Posterior vena cava (tissue), 2 donors: ENCODE measurements at regions of chr17 and their contacts with region 1.

Region 1: GRCh38 chr17:5065227-5065744 is 13.0 kb upstream of the ZFP3 start:
- DNase-seq: no peak

Region 2: DNA sequence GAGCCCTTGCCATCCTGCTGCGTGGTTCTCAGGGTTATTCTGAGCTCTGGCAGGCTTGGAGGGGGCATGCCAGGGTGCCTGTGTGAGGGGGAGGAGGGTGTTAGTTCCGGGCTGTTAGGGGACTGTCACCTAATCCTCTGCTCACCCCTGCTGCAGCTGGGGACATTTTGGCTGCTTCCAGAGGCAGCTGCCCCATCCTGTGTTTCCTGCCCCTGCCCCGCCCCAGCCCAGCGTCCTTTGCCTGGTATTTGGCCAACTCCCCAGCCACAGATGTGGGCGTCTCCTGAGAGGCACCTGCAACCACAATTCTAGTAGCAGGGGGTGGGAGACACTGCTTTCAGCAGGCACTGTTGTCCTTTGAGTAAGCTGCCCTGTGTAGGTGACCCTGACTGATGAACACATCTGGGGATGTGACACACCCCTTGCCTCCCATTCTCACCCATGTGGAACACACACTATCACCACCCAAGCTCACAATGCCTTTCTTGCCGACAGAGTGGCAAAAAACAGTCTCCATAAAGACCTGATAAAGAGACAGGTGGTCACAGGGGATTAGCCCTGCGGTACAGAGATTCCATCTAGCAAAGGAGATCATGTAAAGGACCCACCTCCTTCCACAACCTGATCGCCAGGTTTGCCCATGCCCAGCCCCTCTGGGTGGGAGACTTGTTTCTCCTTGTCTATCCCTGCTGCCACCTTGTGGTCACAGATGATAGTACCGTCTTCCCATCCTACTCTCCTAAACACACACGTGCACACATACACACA is 162.1 kb before region 1 on chr17 and contains the start of gene CHRNE:
- intact Hi-C with region 1: loop called (anchors 10 kb)
- DNase-seq: no peak
- total RNA-seq, gene CHRNE: 0.57 to 1.5 TPM

Region 3: DNA sequence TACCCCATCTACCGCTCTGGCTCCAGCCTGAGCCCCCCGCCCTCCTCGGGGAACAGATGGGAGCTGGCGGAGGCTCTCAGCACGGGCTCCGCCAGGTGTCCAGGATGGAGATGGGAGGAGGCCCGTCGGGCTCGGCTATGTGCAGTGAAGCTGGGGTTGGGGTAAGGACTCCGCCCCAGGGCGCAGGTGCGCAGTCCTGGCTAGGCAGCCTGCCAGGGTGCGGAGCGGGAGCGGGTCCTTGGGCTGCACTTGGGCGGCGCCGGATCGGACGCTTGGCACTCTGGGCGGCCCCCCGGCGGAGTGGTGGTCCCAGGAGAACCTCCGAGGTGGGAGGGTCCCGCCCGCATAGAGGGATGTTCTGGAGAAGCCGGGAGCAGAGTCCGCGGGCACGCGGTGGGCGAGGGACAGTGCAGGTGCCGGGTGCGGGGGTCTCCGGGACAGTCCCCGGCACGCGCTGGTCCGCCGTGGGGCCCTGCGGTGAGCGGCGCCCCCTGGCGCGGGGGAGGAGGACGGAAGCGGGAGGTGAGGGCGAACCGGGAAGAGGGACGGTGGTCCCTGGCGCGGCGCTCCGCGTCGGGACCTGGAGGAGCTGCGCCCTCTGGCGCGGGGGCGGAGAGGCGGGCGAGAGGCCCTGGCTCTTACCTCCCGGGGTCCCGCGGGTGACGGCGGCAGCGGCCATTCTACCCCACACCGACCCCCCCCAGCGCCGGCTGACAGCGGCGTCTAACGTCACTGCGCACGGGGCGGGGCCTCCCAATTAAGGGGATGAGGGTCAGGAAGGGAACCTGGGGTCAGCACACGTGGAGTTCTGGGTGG is 78.1 kb before region 1 on chr17 and contains the start of gene CAMTA2:
- intact Hi-C with region 1: no loop called
- DNase-seq: peak; percentile 97
- total RNA-seq, gene CAMTA2: 52.0 to 72.2 TPM

Region 4: DNA sequence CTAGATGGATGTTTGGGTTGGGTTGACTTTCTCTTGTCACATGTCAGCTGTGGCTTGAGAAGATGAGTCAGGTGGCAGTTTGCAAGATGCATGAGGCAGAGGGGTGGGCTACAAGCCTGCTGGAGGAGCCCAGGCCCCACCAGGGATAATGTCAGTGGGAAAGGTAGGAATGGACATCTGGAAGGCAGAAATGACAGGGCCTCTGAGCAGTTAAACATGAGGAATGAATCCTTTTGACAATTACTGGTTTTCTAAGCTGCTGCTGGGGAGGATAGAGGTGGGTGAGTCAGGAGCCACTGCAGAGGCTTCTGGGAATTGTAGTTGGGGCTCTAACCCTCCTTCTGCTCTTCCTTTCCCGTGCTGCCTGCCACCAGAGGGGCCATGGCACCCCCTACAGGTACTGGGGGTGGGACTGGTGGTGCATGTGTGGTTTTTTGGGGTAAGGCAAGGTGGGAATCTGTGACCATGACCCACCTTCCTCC is 45.8 kb before region 1 on chr17:
- intact Hi-C with region 1: no loop called
- DNase-seq: no peak

Region 5: DNA sequence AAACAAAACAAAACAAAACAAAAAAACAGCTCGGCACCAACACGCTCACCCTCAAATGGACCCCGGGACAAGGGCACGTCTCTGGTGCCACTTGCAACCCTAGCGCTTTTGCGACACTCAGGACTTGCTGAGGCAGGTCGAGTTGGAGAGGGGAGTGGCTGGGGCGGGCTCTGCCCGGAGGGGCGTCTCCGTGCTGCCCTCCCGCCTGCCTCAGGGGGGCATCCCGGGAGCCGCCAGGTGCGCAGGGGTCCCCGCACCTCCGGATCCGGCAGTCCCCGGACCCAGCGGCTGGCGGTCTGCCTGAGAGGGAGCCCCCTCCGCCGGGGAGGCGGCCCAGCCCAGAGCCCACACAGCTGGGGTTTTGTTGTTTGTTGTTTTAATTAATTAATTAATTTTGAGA is 30.0 kb before region 1 on chr17 and contains the start of gene SLC52A1:
- intact Hi-C with region 1: loop called in 1 of 2 experiments (anchors 1 kb)
- DNase-seq: no peak
- total RNA-seq, gene SLC52A1: 0.14 TPM in 1 of 2 donors, not detected in the other

Region 6: GRCh38 chr17:5115673-5116651 is 50.7 kb after region 1 on chr17 and contains the start of gene USP6:
- intact Hi-C with region 1: loop called in 1 of 2 experiments (anchors 1 kb)
- DNase-seq: peak; percentile 76
- total RNA-seq, gene USP6: 0.19 TPM in 1 of 2 donors, not detected in the other